CD8-positive, alpha-beta memory T cell (primary cell): ENCODE measurements at regions of chr3 and their contacts with region 1.

Region 1: GRCh38 chr3:14426063-14426620 is 23.7 kb downstream of the SLC6A6 start:
- DNase-seq: peak; percentile 40 to 83 (median 57)
- H3K4me3 ChIP-seq: no peak overlapping the region
- H3K4me3 Mint-ChIP-seq: peak overlapping the region; percentile 34 to 86 (median 74)
- H3K27ac ChIP-seq: peak overlapping the region; percentile 39
- H3K27ac Mint-ChIP-seq: peak overlapping the region; percentile 93 to 100 (median 98)
- H3K4me1 ChIP-seq: peaks cover 91% of the 10 kb centered on the region
- H3K4me1 Mint-ChIP-seq: peaks cover 90 to 100% (median 97%) of the 10 kb centered on the region in 3 donors
- H3K27me3 ChIP-seq: no peaks in the 10 kb centered on the region
- H3K27me3 Mint-ChIP-seq: peaks cover 0 to 2% of the 10 kb centered on the region in 2 donors

Region 2: GRCh38 chr3:14461748-14462324 is 35.7 kb after region 1 on chr3:
- CTCF ChIA-PET with region 1: interaction called, 15 read pairs
- POLR2A ChIA-PET with region 1: no interaction called
- DNase-seq: peak; percentile 10 to 68 (median 23)
- H3K4me3 ChIP-seq: no peak overlapping the region
- H3K4me3 Mint-ChIP-seq: no peak overlapping the region
- H3K27ac ChIP-seq: no peak overlapping the region
- H3K27ac Mint-ChIP-seq: peak overlapping the region in 1 of 8 donors; percentile 87
- H3K4me1 ChIP-seq: no peaks in the 10 kb centered on the region
- H3K4me1 Mint-ChIP-seq: peaks cover 0 to 5% (median 4%) of the 10 kb centered on the region in 3 donors
- H3K27me3 ChIP-seq: no peaks in the 10 kb centered on the region
- H3K27me3 Mint-ChIP-seq: no peaks in the 10 kb centered on the region

Region 3: DNA sequence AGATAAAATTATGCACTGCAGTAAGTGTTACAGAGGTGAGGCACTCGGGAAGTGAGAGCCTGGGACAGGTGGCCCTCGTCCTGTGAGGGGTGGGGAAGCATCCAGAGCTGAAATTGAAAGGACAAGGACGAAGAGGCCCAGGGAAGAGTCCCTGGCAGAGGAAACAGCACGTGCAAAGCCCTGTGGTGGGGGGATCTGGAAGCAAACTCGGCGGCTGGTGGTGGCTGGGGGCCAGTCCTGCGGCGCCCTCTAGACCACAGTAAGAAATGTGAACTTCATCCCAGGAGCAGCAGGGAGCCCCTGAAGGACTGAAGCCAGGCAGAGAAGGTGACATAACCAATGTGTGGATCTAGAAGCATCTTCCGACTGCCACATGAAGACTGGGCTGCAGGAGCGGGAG is 71.2 kb after region 1 on chr3:
- CTCF ChIA-PET with region 1: no interaction called
- POLR2A ChIA-PET with region 1: no interaction called
- DNase-seq: no peak
- H3K4me3 ChIP-seq: no peak overlapping the region
- H3K4me3 Mint-ChIP-seq: no peak overlapping the region
- H3K27ac ChIP-seq: no peak overlapping the region
- H3K27ac Mint-ChIP-seq: no peak overlapping the region
- H3K4me1 ChIP-seq: no peaks in the 10 kb centered on the region
- H3K4me1 Mint-ChIP-seq: no peaks in the 10 kb centered on the region
- H3K27me3 ChIP-seq: no peaks in the 10 kb centered on the region
- H3K27me3 Mint-ChIP-seq: peaks cover 4 to 5% of the 10 kb centered on the region in 2 donors

Region 4: DNA sequence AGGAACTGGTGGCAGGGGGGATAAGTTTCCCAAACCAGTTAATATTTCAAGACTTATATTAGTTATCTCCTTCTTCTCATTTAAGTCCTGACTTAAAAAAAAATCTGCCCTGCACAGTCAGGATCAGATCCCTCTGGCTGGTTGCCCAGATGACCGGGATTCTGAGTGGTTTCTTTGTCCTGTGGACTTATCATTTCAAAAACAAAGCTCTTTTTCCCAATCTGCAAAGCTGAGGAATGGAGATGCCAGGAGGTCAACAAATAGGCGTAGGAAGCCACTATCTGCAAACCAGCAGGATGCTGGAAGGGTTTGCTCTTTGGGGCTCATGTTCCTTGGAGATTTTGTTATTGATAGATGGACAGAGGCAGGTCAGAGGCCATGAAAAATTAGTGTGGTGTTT is 254.6 kb after region 1 on chr3:
- CTCF ChIA-PET with region 1: no interaction called
- POLR2A ChIA-PET with region 1: no interaction called
- DNase-seq: no peak
- H3K4me3 ChIP-seq: no peak overlapping the region
- H3K4me3 Mint-ChIP-seq: no peak overlapping the region
- H3K27ac ChIP-seq: no peak overlapping the region
- H3K27ac Mint-ChIP-seq: peak overlapping the region in 1 of 8 donors; percentile 25
- H3K4me1 ChIP-seq: no peaks in the 10 kb centered on the region
- H3K4me1 Mint-ChIP-seq: no peaks in the 10 kb centered on the region
- H3K27me3 ChIP-seq: no peaks in the 10 kb centered on the region
- H3K27me3 Mint-ChIP-seq: peaks cover 0 to 1% of the 10 kb centered on the region in 2 donors